Activated CD8-positive, alpha-beta T cell treated with anti-CD3 and anti-CD28 coated beads for 36 hours (primary cell): ENCODE measurements at regions of chr11 and their contacts with region 1.

Region 1: DNA sequence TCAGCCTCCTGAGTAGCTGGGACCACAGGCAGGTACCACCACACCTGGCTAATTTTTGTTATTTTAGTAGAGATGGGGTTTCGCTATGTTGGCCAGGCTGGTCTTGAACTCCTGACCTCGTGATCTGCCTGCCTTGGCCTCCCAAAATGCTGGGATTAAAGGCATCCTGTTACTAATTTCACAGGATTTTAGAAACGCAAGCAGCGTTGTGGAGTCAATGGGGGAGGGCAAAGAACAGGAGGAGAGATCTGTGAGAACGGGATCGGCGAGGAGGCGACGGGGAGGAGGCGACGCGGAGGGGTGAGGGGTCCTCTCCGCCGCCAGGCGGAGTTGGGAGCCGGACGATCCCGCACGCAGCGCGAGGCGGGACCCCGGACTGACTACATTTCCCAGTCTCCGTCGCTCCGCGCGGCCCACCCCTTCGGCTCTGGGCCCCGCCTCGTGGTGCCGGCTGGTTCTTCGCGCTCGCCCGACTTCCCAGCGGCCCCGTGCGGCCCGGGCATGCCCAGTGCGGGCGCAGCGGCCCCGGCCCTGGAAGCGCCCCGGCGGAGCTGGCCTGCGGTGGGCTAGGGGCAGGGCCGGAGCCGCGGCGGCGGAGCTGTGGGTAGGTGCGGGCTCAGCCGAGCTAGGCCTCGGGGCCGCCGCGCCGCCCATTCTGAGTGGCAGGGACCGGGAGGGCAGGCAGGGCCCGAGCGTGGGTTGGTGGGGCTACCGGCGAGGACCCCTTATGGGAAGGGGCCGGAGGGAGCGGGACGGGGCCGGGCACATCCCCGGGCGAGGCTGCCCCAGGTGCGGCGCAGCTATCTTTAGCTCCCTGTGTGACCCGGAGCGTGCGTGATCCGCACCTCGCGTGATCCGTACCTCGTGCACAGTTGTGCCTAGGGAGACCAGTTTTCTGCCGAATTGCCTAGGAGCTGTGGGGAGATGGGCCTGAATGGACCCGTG is at the start of gene EI24:
- DNase-seq: peak; percentile 92
- ATAC-seq: peak; percentile 97
- H3K4me3 Mint-ChIP-seq: peak within 1 kb of the TSS; percentile 90
- H3K27ac Mint-ChIP-seq: peak within 1 kb of the TSS; percentile 95
- H3K4me1 Mint-ChIP-seq: peaks cover 28% of the 10 kb centered on the region
- H3K27me3 Mint-ChIP-seq: no peaks in the 10 kb centered on the region
- CTCF ChIP-seq: peak; percentile 67
- total RNA-seq, gene EI24: 42.8 to 44.1 TPM

Region 2: GRCh38 chr11:125224391-125225010 is 344.7 kb before region 1 on chr11:
- CTCF ChIA-PET with region 1: no interaction called
- POLR2A ChIA-PET with region 1: no interaction called
- intact Hi-C with region 1: no loop called
- DNase-seq: peak; percentile 8
- ATAC-seq: no peak
- H3K4me3 Mint-ChIP-seq: no peak overlapping the region
- H3K27ac Mint-ChIP-seq: no peak overlapping the region
- H3K4me1 Mint-ChIP-seq: no peaks in the 10 kb centered on the region
- H3K27me3 Mint-ChIP-seq: peaks cover 2% of the 10 kb centered on the region
- CTCF ChIP-seq: no peak

Region 3: DNA sequence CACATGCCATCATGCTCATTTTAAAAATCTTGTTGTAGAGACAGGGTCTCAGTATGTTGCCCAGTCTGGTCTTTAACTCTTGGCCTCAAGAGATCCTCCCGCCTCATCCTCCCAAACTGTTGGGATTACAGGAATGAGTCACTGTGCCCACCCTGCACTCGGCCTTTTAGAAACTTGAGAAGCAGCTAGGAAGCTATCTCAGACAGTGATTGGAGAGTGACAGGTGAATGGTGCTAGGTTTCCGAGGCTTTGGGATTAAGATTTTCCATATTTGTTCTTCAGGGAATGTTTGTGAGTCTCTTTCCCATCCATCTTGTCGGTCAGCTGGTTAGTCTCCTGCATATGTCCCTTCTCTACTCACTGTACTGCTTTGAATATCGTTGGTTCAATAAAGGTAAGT is 10.6 kb after region 1 on chr11:
- CTCF ChIA-PET with region 1: no interaction called
- POLR2A ChIA-PET with region 1: interaction called, 10 read pairs
- intact Hi-C with region 1: no loop called
- DNase-seq: no peak
- ATAC-seq: no peak
- H3K4me3 Mint-ChIP-seq: no peak overlapping the region
- H3K27ac Mint-ChIP-seq: no peak overlapping the region
- H3K4me1 Mint-ChIP-seq: no peaks in the 10 kb centered on the region
- H3K27me3 Mint-ChIP-seq: no peaks in the 10 kb centered on the region
- CTCF ChIP-seq: no peak

Region 4: GRCh38 chr11:125592305-125593112 is 23.3 kb after region 1 on chr11 and contains the start of gene STT3A:
- CTCF ChIA-PET with region 1: interaction called, 9 read pairs
- POLR2A ChIA-PET with region 1: interaction called, 40 read pairs
- intact Hi-C with region 1: no loop called
- DNase-seq: peak; percentile 99
- ATAC-seq: peak; percentile 94
- H3K4me3 Mint-ChIP-seq: peak within 1 kb of the TSS; percentile 100
- H3K27ac Mint-ChIP-seq: peak within 1 kb of the TSS; percentile 99
- H3K4me1 Mint-ChIP-seq: peaks cover 31% of the 10 kb centered on the region
- H3K27me3 Mint-ChIP-seq: no peaks in the 10 kb centered on the region
- CTCF ChIP-seq: no peak
- total RNA-seq, gene STT3A: 111 to 114 TPM

Region 5: DNA sequence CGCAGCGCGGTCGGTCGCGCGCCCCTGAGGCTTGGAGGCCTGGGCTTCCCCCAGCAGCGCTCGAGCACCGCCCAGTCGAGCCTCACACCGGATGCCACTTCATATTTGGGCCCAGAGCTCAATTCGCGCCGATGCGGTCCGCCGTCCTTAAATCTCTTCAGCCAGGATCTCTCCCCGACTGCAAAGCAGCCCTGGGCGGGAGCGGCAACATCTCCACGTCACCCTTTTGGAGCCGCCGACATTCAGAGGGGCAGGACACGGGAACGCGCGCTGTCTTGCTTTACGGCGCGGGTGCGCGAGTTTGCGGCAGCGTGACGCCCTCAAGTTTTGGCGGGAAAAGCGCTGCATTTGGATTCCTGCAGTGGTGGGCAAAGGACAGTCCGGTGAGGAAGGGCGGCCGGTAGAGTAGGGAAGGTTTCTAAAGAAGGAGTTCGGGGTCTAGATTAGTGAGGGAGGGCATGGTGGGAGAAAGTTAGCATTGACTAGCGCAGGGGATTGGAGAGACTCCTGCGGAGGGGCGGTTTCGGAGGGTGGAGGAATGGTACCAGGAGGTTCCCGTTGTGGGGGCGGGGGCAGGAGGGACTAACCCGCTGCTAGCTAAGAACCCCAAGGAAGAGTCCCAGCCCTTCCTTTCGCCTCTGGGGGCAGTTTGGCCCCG is 56.5 kb after region 1 on chr11:
- CTCF ChIA-PET with region 1: no interaction called
- POLR2A ChIA-PET with region 1: interaction called, 16 read pairs
- intact Hi-C with region 1: no loop called
- DNase-seq: peak; percentile 90
- ATAC-seq: peak; percentile 88
- H3K4me3 Mint-ChIP-seq: peak overlapping the region; percentile 93
- H3K27ac Mint-ChIP-seq: peak overlapping the region; percentile 97
- H3K4me1 Mint-ChIP-seq: peaks cover 22% of the 10 kb centered on the region
- H3K27me3 Mint-ChIP-seq: no peaks in the 10 kb centered on the region
- CTCF ChIP-seq: no peak